ENCODE measurements at regions of chr1 and their contacts with region 1.

Region 1: DNA sequence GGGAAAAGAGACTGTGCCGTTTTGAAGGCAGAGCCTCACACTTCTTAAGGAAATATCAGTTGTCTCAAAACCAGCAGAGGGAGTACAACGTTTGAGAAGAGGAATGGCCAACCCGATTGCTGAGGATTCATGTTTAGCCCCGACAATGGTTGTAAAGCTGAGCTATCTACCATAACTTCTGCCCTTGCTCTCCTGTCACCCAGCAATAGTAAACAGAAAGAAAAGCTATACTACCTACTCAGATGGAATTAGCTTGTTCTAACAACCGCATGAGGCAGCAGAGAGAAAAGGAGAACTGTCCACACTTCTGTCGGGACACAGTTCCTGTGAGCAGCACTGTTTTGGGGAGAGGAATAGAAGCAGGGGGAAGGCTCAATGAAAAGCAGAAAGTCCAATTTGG is 91.2 kb downstream of the SLC45A1 start:
- DNase-seq: peak in 3 of 4 experiments; percentile 40 to 68 (median 53)
- ATAC-seq: peak; percentile 95
- H3K4me3 ChIP-seq: no peak overlapping the region
- H3K27ac ChIP-seq: peak overlapping the region; percentile 30; the same call in 2 of the 3 replicates
- H3K4me1 ChIP-seq: peaks cover 3 to 21% of the 10 kb centered on the region in 2 experiments; a peak in 4 of 5 replicates
- H3K27me3 ChIP-seq: no peaks in the 10 kb centered on the region
- CTCF ChIP-seq: peak; percentile 62 to 76 (median 65)
- EP300 ChIP-seq: no peak
- POLR2A ChIP-seq: no peak
- RAD21 ChIP-seq: peak; percentile 50 to 52

Region 2: DNA sequence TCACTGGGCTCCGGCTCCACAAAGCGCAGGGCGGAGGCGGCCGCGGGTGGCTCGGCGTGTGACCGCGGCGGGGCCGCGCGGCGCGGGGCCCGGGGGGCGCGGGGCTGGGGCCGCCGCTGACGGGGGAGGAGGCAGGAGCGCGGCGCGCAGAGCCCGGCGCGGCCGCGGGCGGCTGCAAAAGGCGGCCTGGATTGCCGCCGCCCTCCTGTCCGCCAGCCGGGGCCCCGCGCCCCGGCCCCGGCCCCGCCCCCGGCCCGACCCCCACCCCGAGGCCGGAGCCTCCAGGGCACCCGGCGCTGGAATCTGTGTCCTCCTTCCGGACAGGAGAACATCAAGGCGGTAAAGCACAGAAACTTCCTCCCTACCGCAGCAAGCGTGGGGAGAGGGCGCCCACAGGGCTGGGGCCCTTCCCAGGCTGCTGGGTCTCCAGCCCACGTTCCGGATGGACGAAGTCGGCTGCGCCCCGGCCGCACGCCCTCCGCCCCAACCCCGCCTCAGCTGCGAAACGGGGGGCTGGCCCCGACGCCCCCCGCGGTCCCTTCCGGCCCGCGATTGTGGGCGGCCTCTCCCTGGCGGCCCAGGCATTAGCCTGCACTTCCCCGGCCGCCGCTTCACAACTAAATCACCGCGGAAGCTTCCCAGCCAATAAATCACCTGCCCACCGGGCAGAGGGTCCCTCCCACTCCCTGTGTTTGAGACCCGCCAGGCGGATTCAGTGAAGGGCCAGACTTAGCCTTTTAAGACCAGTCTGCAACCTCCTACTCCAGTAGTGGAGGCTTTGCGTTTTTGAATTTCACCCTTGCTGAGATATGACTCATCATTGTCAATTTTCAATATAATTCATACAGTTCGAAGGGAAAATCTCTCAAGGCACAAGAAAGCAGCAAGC is 14.8 kb after region 1 on chr1:
- CTCF ChIA-PET with region 1: no interaction called
- POLR2A ChIA-PET with region 1: interaction called, 13 read pairs
- in situ Hi-C with region 1: no loop called
- intact Hi-C with region 1: no loop called
- DNase-seq: peak; percentile 66 to 90 (median 84)
- ATAC-seq: peak; percentile 77
- H3K4me3 ChIP-seq: peak overlapping the region; percentile 66
- H3K27ac ChIP-seq: peak overlapping the region; percentile 71
- H3K4me1 ChIP-seq: peaks cover 17 to 24% of the 10 kb centered on the region in 2 experiments
- H3K27me3 ChIP-seq: no peaks in the 10 kb centered on the region
- CTCF ChIP-seq: no peak
- EP300 ChIP-seq: no peak
- POLR2A ChIP-seq: no peak; the same call in 1 of the 2 replicates
- RAD21 ChIP-seq: no peak

Region 3: GRCh38 chr1:8439015-8439702 is 30.1 kb after region 1 on chr1:
- CTCF ChIA-PET with region 1: no interaction called
- POLR2A ChIA-PET with region 1: interaction called, 3 read pairs
- in situ Hi-C with region 1: no loop called
- intact Hi-C with region 1: loop called (anchors 1 kb)
- DNase-seq: peak; percentile 72 to 82 (median 76)
- ATAC-seq: peak; percentile 93
- H3K4me3 ChIP-seq: no peak overlapping the region
- H3K27ac ChIP-seq: peak overlapping the region; percentile 2; the same call in 1 of the 3 replicates
- H3K4me1 ChIP-seq: peaks cover 0 to 14% of the 10 kb centered on the region in 2 experiments; a peak in 4 of 5 replicates
- H3K27me3 ChIP-seq: no peaks in the 10 kb centered on the region
- CTCF ChIP-seq: peak; percentile 12 to 50 (median 43); a peak in 4 of 6 replicates
- EP300 ChIP-seq: no peak
- POLR2A ChIP-seq: no peak
- RAD21 ChIP-seq: peak in 1 of 2 experiments; percentile 43; a peak in 2 of 4 replicates